ENCODE measurements at regions of chr2 and their contacts with region 1.

Region 1: GRCh38 chr2:196249860-196250259 is 78.5 kb upstream of the STK17B start:
- DNase-seq: no peak
- H3K4me3 ChIP-seq: no peak overlapping the region
- H3K27ac ChIP-seq: no peak overlapping the region
- H3K4me1 ChIP-seq: peaks cover 4% of the 10 kb centered on the region
- H3K27me3 ChIP-seq: no peaks in the 10 kb centered on the region
- CTCF ChIP-seq: no peak
- POLR2A ChIP-seq: no peak

Region 2: GRCh38 chr2:196213252-196213980 is 36.4 kb before region 1 on chr2:
- CTCF ChIA-PET with region 1: no interaction called
- POLR2A ChIA-PET with region 1: no interaction called
- dilution Hi-C with region 1: no loop called
- intact Hi-C with region 1: loop called (anchors 2 kb)
- DNase-seq: no peak
- H3K4me3 ChIP-seq: no peak overlapping the region
- H3K27ac ChIP-seq: no peak overlapping the region
- H3K4me1 ChIP-seq: no peaks in the 10 kb centered on the region
- H3K27me3 ChIP-seq: no peaks in the 10 kb centered on the region
- CTCF ChIP-seq: no peak
- POLR2A ChIP-seq: no peak

Measured in endothelial cell of umbilical vein (primary cell).